Right ventricle myocardium superior (tissue), 1 donor: ENCODE measurements at regions of chr12 and their contacts with region 1.

Region 1: GRCh38 chr12:93569656-93570551 is 2.6 kb upstream of the SOCS2 start:
- DNase-seq: peak; percentile 90
- ATAC-seq: peak; percentile 82

Region 2: GRCh38 chr12:93497456-93497855 is 72.4 kb before region 1 on chr12:
- intact Hi-C with region 1: no loop called
- DNase-seq: no peak
- ATAC-seq: no peak

Region 3: DNA sequence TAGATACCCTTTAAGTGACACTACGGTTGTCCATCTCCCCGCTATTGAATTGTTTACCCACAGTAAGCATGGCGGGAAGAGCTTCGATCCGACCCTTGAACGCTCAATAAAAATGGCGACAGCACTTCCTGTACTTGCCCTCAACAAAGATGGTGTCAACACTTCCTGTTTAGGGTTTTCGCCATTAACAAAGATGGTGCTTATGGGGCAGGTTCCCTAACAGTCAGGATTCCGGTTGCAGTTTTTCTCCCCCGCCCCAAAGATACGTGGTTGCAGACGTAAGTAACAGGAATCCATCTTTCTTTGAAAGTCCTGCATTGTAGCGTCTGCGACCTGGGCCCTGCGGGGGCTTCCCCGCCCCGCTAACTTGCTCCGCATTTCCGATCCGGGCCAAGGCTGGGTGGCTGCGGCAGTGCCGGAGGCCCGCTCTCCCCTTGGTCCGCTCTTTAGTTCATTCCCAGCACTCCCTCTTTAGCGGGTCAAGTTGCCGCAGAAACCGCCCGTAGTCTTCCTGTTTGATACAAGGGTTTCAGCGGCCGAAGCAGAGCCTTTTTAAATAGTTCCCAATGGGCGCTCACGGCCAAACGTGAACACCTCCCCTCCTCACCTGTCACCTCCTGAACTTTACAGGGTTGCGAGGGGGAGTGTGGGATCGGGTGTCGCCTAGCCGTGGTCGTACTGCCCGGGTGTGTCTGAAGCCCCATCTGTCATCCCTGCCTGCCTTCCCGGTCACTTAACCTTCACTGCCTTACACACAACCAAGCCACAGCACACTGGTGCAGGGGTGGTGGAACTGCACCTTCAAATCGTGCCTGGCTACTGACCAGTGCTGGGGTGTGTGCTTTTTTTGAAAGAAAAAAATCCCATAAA is 107.5 kb after region 1 on chr12 and contains the start of gene CRADD:
- intact Hi-C with region 1: loop called (anchors 2 kb)
- DNase-seq: peak; percentile 80
- ATAC-seq: peak; percentile 94
- total RNA-seq, gene CRADD: 35.8 TPM

Region 4: DNA sequence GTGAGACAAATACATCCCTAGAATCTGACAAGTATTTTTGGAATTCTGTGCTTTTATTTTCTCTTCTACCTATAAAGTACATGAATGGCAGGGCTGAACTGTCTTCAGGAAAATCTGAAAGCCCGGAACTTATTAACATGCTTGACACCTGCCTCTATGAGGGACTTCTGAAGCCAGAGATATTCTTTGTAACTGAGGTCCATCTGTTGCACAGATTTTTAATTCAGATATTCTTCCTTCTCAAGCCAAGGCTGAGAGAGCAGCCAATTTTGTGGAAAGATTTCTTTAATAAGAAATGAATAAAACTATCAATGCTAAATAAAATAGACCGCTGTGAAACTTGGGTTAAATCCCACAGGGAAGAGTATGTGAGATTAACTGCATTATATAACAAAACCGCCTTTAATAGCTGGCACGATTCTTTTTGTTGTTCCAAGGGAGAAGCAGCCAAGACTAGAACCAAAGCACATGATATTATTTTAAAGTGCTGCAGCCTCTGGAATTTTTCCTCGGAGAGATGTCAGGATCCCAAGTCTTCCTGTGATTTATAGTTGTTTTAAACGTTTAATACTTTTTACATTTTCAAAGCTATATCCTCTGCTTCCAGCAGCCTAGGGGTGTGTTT is 256.1 kb after region 1 on chr12:
- intact Hi-C with region 1: loop called (anchors 10 kb)
- DNase-seq: no peak
- ATAC-seq: peak; percentile 54

Region 5: GRCh38 chr12:93979189-93979588 is 409.3 kb after region 1 on chr12:
- intact Hi-C with region 1: loop called (anchors 10 kb)
- DNase-seq: no peak
- ATAC-seq: peak; percentile 34

Region 6: DNA sequence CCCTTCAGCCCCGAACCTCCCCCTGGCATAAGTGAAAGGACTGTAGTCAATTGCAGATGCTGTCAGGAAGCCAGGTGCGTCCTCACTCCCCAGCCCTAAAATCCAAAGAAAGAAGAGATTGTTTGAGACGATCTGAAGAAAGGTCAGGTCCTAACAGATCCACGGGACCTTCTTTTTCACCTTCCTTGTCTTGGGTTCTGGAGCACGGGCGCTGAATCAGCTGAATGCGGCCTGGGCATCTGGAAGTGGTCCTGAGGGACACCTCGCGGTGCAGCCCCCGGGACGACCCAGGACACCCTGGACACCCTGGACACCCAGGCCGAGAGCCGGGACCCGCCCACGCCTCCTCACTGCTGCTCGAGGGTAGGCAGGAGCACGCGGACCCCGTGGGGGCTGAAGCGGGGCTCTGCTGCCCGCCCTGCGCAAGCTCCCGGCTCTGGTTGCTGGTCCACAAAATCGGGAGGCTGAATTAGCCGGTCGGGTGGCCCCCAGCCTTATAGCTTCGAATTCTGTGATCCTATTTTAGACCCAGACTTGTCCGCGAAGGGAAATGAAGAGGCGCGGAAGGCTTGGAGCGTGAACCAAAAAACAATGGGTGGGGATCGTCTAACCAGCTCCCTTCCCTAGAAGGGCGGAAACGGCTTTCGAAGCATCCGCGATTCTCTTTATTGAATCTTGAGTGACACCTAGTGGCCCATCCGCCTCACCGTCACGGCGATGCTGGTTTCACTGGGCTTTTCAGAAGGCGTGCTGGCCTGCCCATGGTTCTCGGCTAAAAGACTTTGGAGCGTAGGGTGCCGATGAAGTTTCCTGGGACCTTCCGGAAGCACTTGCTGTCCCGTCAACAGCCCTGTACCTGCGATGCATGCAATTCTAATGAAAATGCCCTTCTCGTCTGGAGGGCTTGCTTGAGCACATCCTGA is 532.1 kb after region 1 on chr12:
- intact Hi-C with region 1: loop called (anchors 2 kb)
- DNase-seq: peak; percentile 93
- ATAC-seq: peak; percentile 94